Left ventricle myocardium inferior (tissue), 1 donor: ENCODE measurements at regions of chr15 and their contacts with region 1.

Region 1: GRCh38 chr15:51075826-51076523 is 18.7 kb downstream of the TNFAIP8L3 start:
- DNase-seq: no peak
- H3K4me3 ChIP-seq: no peak overlapping the region
- H3K27ac ChIP-seq: peak overlapping the region; percentile 81
- H3K4me1 ChIP-seq: peaks cover 53% of the 10 kb centered on the region
- H3K27me3 ChIP-seq: no peaks in the 10 kb centered on the region
- CTCF ChIP-seq: no peak

Region 2: GRCh38 chr15:51144021-51144532 is 68.1 kb after region 1 on chr15:
- intact Hi-C with region 1: loop called (anchors 2 kb)
- DNase-seq: no peak
- H3K4me3 ChIP-seq: no peak overlapping the region
- H3K27ac ChIP-seq: no peak overlapping the region
- H3K4me1 ChIP-seq: no peaks in the 10 kb centered on the region
- H3K27me3 ChIP-seq: no peaks in the 10 kb centered on the region
- CTCF ChIP-seq: no peak